ENCODE measurements at regions of chr16 and their contacts with region 1.

Region 1: GRCh38 chr16:30534368-30535105 is at the start of gene ZNF747:
- DNase-seq: peak; percentile 95
- ATAC-seq: peak; percentile 80
- H3K4me3 Mint-ChIP-seq: peak within 1 kb of the TSS; percentile 91
- H3K27ac Mint-ChIP-seq: peak within 1 kb of the TSS; percentile 100
- H3K4me1 Mint-ChIP-seq: peaks cover 44% of the 10 kb centered on the region
- H3K27me3 Mint-ChIP-seq: no peaks in the 10 kb centered on the region
- total RNA-seq, gene ZNF747: 6.3 to 8.0 TPM

Region 2: DNA sequence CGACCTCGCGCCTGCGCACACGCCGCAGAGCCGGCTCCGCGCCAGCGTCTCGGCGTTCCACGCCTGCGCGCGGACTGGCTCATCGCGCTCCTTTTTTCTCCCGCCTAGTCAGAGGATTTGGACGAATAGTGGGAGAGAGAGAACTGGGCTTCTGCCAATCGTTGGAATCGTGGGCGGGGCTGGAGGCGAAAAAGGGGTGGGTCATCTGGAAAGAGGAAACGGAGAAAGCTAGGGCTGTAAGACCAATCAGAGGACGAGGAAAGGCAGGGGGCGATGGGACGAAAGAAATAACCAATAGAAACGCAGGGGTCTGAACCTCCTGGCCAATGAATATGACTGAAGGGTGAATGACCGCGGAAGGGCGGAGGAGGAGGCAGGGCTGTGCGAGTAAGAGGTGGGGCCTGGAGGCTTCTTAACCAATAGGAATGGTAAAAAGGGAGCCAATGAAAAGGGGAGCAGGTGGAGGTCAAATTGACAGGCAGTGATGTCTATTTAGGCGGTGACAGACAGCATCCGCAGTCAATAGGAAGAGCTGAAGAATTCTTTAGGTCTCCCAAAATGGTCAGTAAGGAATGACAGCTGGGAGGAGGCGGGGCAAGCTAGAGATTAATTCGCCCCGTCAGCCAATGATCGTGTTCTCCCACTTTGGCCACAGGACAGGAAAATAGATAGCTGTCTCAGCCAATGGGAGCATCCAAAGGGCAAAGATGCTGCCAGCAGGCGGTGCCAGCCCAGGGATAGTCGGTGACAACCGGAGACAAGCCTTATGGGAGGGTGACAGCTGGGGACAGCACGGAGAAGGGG is 163.9 kb before region 1 on chr16 and contains the start of gene TBC1D10B:
- CTCF ChIA-PET with region 1: no interaction called
- POLR2A ChIA-PET with region 1: interaction called, 3 read pairs
- intact Hi-C with region 1: loop called in 1 of 2 experiments (anchors 2 kb)
- DNase-seq: peak; percentile 99
- ATAC-seq: peak; percentile 88
- H3K4me3 Mint-ChIP-seq: peak within 1 kb of the TSS; percentile 89
- H3K27ac Mint-ChIP-seq: peak within 1 kb of the TSS; percentile 97
- H3K4me1 Mint-ChIP-seq: peaks cover 40% of the 10 kb centered on the region
- H3K27me3 Mint-ChIP-seq: no peaks in the 10 kb centered on the region
- total RNA-seq, gene TBC1D10B: 38.1 to 43.4 TPM

Region 3: DNA sequence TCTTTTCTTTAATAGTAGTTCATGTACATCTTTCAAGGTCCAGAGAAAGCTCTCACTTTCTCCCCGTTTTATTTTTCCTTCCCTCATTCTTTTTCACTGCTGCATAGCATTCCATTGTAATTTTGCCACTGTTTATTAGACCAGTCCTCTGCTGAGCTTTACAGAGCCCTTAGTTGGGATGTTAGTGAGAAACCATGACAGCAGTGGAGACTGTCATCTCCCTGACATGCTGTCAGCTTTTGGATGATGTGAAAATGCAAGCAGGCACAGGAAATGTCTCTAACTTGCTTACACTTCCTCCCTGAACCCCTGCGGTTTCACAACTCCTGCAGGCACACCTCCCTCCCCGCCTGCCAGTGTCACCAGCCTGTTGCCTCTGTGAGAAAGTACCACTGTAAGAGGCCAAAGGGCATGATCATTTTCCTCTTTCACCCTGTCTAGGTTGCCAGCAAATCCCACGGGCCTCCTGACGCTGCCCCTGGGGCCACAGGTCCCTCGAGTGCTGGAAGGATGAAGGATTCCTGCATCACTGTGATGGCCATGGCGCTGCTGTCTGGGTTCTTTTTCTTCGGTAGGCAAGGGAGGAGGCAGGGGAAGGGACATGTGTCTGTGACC is 62.1 kb before region 1 on chr16 and contains the start of gene ITGAL:
- CTCF ChIA-PET with region 1: interaction called, 5 read pairs
- POLR2A ChIA-PET with region 1: interaction called, 8 read pairs
- intact Hi-C with region 1: loop called in 1 of 2 experiments (anchors 5 kb)
- DNase-seq: peak; percentile 93
- ATAC-seq: peak; percentile 62
- H3K4me3 Mint-ChIP-seq: peak within 1 kb of the TSS; percentile 95
- H3K27ac Mint-ChIP-seq: peak within 1 kb of the TSS; percentile 99
- H3K4me1 Mint-ChIP-seq: peaks cover 63% of the 10 kb centered on the region
- H3K27me3 Mint-ChIP-seq: no peaks in the 10 kb centered on the region
- total RNA-seq, gene ITGAL: 210 to 222 TPM

Region 4: DNA sequence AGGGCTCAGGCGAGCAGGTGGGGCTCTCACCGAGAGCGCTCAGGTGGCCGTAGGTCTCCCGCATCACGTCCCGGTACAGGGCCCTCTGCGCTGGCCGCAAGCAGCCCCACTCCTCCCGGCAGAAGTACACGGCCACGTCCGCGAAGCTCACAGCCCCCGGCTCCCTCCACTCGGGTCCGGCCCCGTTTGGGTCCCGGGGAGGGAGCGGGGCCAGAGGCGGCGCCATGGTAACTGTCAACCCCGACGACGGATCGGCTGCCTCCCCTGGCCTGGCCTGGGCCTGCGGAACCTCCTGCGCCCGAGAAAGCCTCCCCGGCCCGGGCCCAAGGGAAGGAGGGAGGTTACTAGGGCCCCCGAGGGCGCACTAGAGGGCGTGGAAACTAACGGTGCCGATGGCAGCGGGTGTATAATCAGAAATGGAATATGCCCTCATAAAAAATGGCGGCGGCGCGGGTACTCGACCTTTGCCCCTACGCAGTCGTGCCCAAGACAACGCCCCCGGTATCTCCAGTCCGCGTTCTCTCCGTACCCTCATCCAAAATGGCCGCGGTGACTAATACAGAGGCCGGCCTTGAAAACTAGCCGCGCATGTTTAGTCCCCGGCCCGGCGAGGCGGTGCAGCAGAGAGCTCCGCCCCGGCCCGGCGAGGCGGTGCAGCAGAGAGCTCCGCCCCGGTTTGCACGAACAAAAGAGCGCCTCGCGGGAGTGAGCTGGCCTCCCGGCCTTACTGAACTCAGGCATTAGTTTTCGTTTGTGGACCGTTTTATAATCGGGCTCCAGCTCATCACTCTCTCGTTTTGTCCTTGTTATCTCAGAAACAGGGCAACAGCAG is 23.6 kb after region 1 on chr16 and contains the start of gene ZNF764:
- CTCF ChIA-PET with region 1: interaction called, 22 read pairs
- POLR2A ChIA-PET with region 1: interaction called, 30 read pairs
- intact Hi-C with region 1: loop called (anchors 1 kb)
- DNase-seq: peak; percentile 99
- ATAC-seq: peak; percentile 96
- H3K4me3 Mint-ChIP-seq: peak within 1 kb of the TSS; percentile 85
- H3K27ac Mint-ChIP-seq: peak within 1 kb of the TSS; percentile 94
- H3K4me1 Mint-ChIP-seq: peaks cover 44% of the 10 kb centered on the region
- H3K27me3 Mint-ChIP-seq: no peaks in the 10 kb centered on the region
- total RNA-seq, gene ZNF764: 8.0 to 11.2 TPM

Region 5: GRCh38 chr16:30602616-30603277 is 68.2 kb after region 1 on chr16:
- CTCF ChIA-PET with region 1: interaction called, 17 read pairs
- POLR2A ChIA-PET with region 1: interaction called, 7 read pairs
- intact Hi-C with region 1: no loop called
- DNase-seq: no peak
- ATAC-seq: no peak
- H3K4me3 Mint-ChIP-seq: no peak overlapping the region
- H3K27ac Mint-ChIP-seq: no peak overlapping the region
- H3K4me1 Mint-ChIP-seq: peaks cover 7% of the 10 kb centered on the region
- H3K27me3 Mint-ChIP-seq: no peaks in the 10 kb centered on the region

Region 6: DNA sequence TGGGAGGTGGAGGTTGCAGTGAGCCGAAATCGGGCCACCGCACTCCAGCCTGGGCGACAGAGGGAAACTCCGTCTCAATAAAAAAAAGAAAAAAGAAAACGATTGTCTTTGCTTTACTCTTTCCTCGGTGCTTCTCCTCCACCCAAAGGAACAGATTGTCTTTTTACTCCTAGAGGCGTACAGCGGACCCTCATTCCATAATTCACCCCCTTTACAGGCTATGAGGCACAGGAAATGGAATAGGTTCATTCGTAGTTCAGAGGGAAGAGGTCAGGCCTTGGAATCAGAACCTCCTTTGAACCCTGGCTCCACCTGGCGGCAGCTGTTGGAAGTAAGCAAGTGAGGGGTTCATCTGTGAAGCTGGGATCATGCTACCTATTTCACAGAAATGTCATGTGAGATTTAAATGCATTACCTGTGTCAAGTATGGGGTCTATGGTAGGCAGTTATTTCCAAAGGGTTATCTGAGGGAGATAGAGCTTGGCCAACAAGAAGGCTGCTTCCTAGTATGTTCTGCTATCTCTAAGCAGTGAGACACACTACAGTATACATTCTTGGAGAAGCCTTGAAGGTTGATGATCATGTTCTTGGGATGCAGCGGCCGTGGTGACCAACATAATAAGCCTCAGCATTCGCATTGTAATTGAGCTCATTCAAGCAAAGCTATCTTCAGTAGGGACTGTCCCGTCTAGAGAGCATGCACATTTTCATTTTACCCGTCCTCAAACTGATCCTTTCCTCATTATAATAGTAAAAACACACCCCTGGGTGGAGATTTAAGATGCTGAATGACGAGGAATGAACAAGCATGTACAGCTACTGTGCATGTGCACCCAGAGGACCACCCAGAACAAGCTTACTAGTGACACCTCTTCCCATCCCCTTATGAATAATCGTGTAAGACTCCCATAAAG is 94.3 kb after region 1 on chr16:
- CTCF ChIA-PET with region 1: no interaction called
- POLR2A ChIA-PET with region 1: no interaction called
- intact Hi-C with region 1: loop called in 1 of 2 experiments (anchors 1 kb)
- DNase-seq: peak; percentile 95
- ATAC-seq: peak; percentile 93
- H3K4me3 Mint-ChIP-seq: peak overlapping the region; percentile 58
- H3K27ac Mint-ChIP-seq: peak overlapping the region; percentile 82
- H3K4me1 Mint-ChIP-seq: peaks cover 14% of the 10 kb centered on the region
- H3K27me3 Mint-ChIP-seq: no peaks in the 10 kb centered on the region

Region 7: GRCh38 chr16:30867747-30868146 is 333.2 kb after region 1 on chr16:
- CTCF ChIA-PET with region 1: no interaction called
- POLR2A ChIA-PET with region 1: no interaction called
- intact Hi-C with region 1: no loop called
- DNase-seq: no peak
- ATAC-seq: no peak
- H3K4me3 Mint-ChIP-seq: no peak overlapping the region
- H3K27ac Mint-ChIP-seq: no peak overlapping the region
- H3K4me1 Mint-ChIP-seq: peaks cover 1% of the 10 kb centered on the region
- H3K27me3 Mint-ChIP-seq: no peaks in the 10 kb centered on the region

Region 8: DNA sequence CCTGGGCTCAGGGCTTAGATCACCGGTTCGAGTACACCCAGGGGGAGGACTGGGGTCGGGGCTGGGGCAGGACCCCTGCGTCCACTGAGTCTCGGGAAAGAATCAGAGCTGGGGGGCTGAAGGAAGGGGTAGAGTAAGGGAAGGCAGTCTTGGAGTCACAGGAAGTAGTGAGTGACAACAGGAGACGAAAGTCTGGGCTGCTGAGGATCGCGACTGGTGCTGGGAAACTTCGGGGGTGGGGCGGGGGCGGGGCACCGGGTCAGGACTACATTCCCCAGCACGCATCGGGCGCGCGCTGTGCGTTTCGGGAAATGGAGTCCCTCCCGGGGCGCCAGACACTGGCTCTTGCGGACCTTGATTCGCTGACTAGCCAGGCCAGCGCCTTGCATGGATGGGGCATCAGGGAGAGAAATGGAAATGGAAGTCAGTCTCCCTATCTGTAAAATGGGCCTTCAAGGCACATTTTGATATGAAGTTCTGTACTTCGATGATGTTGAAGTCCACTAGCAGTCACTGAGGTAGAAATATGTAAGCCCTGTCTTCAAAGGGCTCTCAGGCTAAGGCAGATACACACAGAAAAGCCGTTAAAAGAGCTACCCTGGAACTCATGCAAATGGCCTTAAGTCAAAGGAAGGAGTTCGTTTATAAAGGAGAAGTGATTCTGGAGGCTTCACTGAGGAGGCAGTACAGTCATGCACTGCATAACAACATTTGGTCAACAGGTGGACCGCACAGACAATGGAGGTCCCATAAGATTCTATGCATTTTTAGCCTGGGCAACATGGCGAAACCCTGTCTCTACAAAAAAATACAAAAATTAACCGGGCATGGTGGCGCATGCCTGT is 362.6 kb after region 1 on chr16:
- CTCF ChIA-PET with region 1: no interaction called
- POLR2A ChIA-PET with region 1: no interaction called
- intact Hi-C with region 1: no loop called
- DNase-seq: peak; percentile 93
- ATAC-seq: peak; percentile 69
- H3K4me3 Mint-ChIP-seq: peak overlapping the region; percentile 61
- H3K27ac Mint-ChIP-seq: peak overlapping the region; percentile 84
- H3K4me1 Mint-ChIP-seq: peaks cover 41% of the 10 kb centered on the region
- H3K27me3 Mint-ChIP-seq: no peaks in the 10 kb centered on the region

Region 9: DNA sequence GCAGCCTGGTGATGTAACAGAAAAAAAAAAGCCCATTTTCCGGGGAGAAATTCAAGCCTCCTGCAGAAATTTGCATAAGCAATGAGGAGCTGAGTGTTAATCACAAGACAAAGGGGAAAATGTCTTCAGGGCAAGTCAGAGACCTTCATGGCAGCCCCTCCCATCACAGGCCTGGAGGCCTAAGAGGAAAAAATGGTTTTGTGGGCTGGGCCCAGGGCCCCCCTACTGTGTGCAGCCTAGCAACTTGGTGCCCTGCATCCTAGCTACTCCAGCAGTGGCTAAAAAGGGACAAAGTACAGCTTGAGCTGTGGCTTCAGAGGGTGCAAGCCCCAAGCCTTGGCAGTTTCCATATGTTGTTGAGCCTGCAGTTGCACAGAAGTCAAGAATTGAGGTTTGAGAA is 1042.9 kb after region 1 on chr16:
- CTCF ChIA-PET with region 1: no interaction called
- POLR2A ChIA-PET with region 1: no interaction called
- intact Hi-C with region 1: no loop called
- DNase-seq: no peak
- ATAC-seq: no peak
- H3K4me3 Mint-ChIP-seq: no peak overlapping the region
- H3K27ac Mint-ChIP-seq: no peak overlapping the region
- H3K4me1 Mint-ChIP-seq: no peaks in the 10 kb centered on the region
- H3K27me3 Mint-ChIP-seq: peaks cover 7% of the 10 kb centered on the region

Measured in activated CD4-positive, alpha-beta T cell treated with anti-CD3 and anti-CD28 coated beads for 36 hours (primary cell).